ENCODE measurements at regions of chr11 and their contacts with region 1.

Region 1: GRCh38 chr11:117946842-117947526 is 17.8 kb upstream of the TMPRSS13 start:
- DNase-seq: peak; percentile 95
- H3K4me3 Mint-ChIP-seq: peak overlapping the region; percentile 4
- H3K27ac Mint-ChIP-seq: peak overlapping the region; percentile 67
- H3K4me1 Mint-ChIP-seq: peaks cover 79% of the 10 kb centered on the region
- H3K27me3 Mint-ChIP-seq: peaks cover 3% of the 10 kb centered on the region

Region 2: GRCh38 chr11:117833401-117833891 is 113.5 kb before region 1 on chr11:
- intact Hi-C with region 1: no loop called
- DNase-seq: no peak
- H3K4me3 Mint-ChIP-seq: no peak overlapping the region
- H3K27ac Mint-ChIP-seq: no peak overlapping the region
- H3K4me1 Mint-ChIP-seq: peaks cover 26% of the 10 kb centered on the region
- H3K27me3 Mint-ChIP-seq: peaks cover 19% of the 10 kb centered on the region

Region 3: DNA sequence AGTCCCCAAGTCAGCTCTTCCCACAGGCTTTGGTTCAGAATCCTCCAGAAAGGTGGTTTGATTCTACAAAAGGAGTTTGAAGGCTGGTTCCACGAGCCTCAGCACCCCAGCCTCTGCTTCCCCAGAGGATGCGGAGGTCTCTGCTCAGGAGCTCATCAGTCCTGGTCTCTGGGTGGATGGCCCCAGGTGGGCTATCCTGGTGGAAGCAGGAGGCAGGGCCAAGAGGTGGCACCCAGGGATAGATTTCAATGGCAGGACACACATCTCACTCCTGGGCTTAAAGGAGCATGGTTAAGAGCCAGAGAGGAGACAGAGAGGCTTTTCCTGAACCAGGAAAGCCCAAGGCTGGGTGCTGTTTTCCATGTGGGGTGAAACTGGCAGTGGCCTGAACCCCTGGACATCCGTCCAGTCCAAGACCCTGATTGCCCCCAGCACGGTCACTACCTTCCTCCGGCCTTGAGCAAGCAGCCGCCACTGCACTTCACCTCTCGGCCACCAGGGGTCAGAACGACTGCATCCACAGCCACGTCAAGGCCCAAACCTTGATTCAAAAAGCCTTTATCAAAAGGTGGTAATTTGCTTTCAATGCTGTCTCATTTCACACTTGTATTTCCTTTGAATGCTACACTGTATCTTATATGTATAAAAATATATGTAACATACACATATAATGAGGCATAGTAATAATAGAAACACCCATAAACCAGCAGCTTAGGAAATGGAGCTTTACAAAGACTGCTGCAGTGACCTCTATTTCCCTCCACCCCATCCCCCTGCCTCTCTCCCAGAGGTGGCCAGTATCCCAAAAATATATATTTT is 103.1 kb before region 1 on chr11:
- intact Hi-C with region 1: loop called (anchors 1 kb)
- DNase-seq: peak; percentile 94
- H3K4me3 Mint-ChIP-seq: no peak overlapping the region
- H3K27ac Mint-ChIP-seq: no peak overlapping the region
- H3K4me1 Mint-ChIP-seq: no peaks in the 10 kb centered on the region
- H3K27me3 Mint-ChIP-seq: peaks cover 22% of the 10 kb centered on the region

Region 4: GRCh38 chr11:117907251-117907981 is 39.6 kb before region 1 on chr11:
- intact Hi-C with region 1: loop called (anchors 5 kb)
- DNase-seq: peak; percentile 92
- H3K4me3 Mint-ChIP-seq: peak overlapping the region; percentile 72
- H3K27ac Mint-ChIP-seq: peak overlapping the region; percentile 90
- H3K4me1 Mint-ChIP-seq: peaks cover 18% of the 10 kb centered on the region
- H3K27me3 Mint-ChIP-seq: no peaks in the 10 kb centered on the region

Region 5: GRCh38 chr11:117969160-117969991 is 22.4 kb after region 1 on chr11:
- intact Hi-C with region 1: no loop called
- DNase-seq: peak; percentile 55
- H3K4me3 Mint-ChIP-seq: no peak overlapping the region
- H3K27ac Mint-ChIP-seq: peak overlapping the region; percentile 69
- H3K4me1 Mint-ChIP-seq: peaks cover 56% of the 10 kb centered on the region
- H3K27me3 Mint-ChIP-seq: no peaks in the 10 kb centered on the region

Region 6: GRCh38 chr11:118295834-118296454 is 349.0 kb after region 1 on chr11:
- intact Hi-C with region 1: no loop called
- DNase-seq: peak; percentile 79
- H3K4me3 Mint-ChIP-seq: no peak overlapping the region
- H3K27ac Mint-ChIP-seq: peak overlapping the region; percentile 31
- H3K4me1 Mint-ChIP-seq: peaks cover 17% of the 10 kb centered on the region
- H3K27me3 Mint-ChIP-seq: peaks cover 2% of the 10 kb centered on the region

Measured in activated CD4-positive, alpha-beta T cell treated with anti-CD3 and anti-CD28 coated beads, Interleukin-2, amount 10 ng/mL, durations not matched to agents 24 days and 14 days (primary cell).